Naive thymus-derived CD4-positive, alpha-beta T cell (primary cell): ENCODE measurements at regions of chr18 and their contacts with region 1.

Region 1: GRCh38 chr18:2906704-2907549 is 60.1 kb downstream of the EMILIN2 start:
- DNase-seq: peak; percentile 33 to 76 (median 50)
- ATAC-seq: peak; percentile 79
- H3K4me3 ChIP-seq: peak overlapping the region; percentile 64
- H3K4me3 Mint-ChIP-seq: peak overlapping the region; percentile 76 to 90 (median 84)
- H3K27ac ChIP-seq: peak overlapping the region; percentile 66
- H3K27ac Mint-ChIP-seq: peak overlapping the region; percentile 49 to 90 (median 76)
- H3K4me1 ChIP-seq: peaks cover 9 to 11% of the 10 kb centered on the region in 2 donors
- H3K4me1 Mint-ChIP-seq: peaks cover 0 to 32% (median 24%) of the 10 kb centered on the region in 7 donors
- H3K27me3 ChIP-seq: no peaks in the 10 kb centered on the region
- H3K27me3 Mint-ChIP-seq: no peaks in the 10 kb centered on the region

Region 2: GRCh38 chr18:2774669-2775068 is 132.3 kb before region 1 on chr18:
- CTCF ChIA-PET with region 1: no interaction called
- POLR2A ChIA-PET with region 1: no interaction called
- intact Hi-C with region 1: loop called in 1 of 2 experiments (anchors 5 kb)
- DNase-seq: no peak
- ATAC-seq: no peak
- H3K4me3 ChIP-seq: no peak overlapping the region
- H3K4me3 Mint-ChIP-seq: no peak overlapping the region
- H3K27ac ChIP-seq: no peak overlapping the region
- H3K27ac Mint-ChIP-seq: peak overlapping the region in 3 of 9 donors; percentile 5 to 78 (median 69)
- H3K4me1 ChIP-seq: no peaks in the 10 kb centered on the region
- H3K4me1 Mint-ChIP-seq: peaks cover 0 to 15% (median 3%) of the 10 kb centered on the region in 7 donors
- H3K27me3 ChIP-seq: no peaks in the 10 kb centered on the region
- H3K27me3 Mint-ChIP-seq: no peaks in the 10 kb centered on the region

Region 3: GRCh38 chr18:2797951-2798350 is 109.0 kb before region 1 on chr18:
- CTCF ChIA-PET with region 1: no interaction called
- POLR2A ChIA-PET with region 1: no interaction called
- intact Hi-C with region 1: loop called in 1 of 2 experiments (anchors 5 kb)
- DNase-seq: no peak
- ATAC-seq: no peak
- H3K4me3 ChIP-seq: no peak overlapping the region
- H3K4me3 Mint-ChIP-seq: no peak overlapping the region
- H3K27ac ChIP-seq: no peak overlapping the region
- H3K27ac Mint-ChIP-seq: peak overlapping the region in 3 of 9 donors; percentile 6 to 48 (median 41)
- H3K4me1 ChIP-seq: no peaks in the 10 kb centered on the region
- H3K4me1 Mint-ChIP-seq: peaks cover 3 to 21% (median 9%) of the 10 kb centered on the region in 7 donors
- H3K27me3 ChIP-seq: no peaks in the 10 kb centered on the region
- H3K27me3 Mint-ChIP-seq: no peaks in the 10 kb centered on the region

Region 4: GRCh38 chr18:2805970-2806943 is 100.7 kb before region 1 on chr18:
- CTCF ChIA-PET with region 1: interaction called, 4 read pairs
- POLR2A ChIA-PET with region 1: no interaction called
- intact Hi-C with region 1: loop called in 1 of 2 experiments (anchors 2 kb)
- DNase-seq: no peak
- ATAC-seq: no peak
- H3K4me3 ChIP-seq: no peak overlapping the region
- H3K4me3 Mint-ChIP-seq: no peak overlapping the region
- H3K27ac ChIP-seq: no peak overlapping the region
- H3K27ac Mint-ChIP-seq: peak overlapping the region in 6 of 9 donors; percentile 15 to 81 (median 56)
- H3K4me1 ChIP-seq: no peaks in the 10 kb centered on the region
- H3K4me1 Mint-ChIP-seq: no peaks in the 10 kb centered on the region
- H3K27me3 ChIP-seq: no peaks in the 10 kb centered on the region
- H3K27me3 Mint-ChIP-seq: no peaks in the 10 kb centered on the region

Region 5: GRCh38 chr18:2846636-2847364 is 60.1 kb before region 1 on chr18 and contains the start of gene EMILIN2:
- CTCF ChIA-PET with region 1: interaction called, 3 read pairs
- POLR2A ChIA-PET with region 1: no interaction called
- intact Hi-C with region 1: loop called (anchors 1 to 2 kb)
- DNase-seq: peak; percentile 22 to 52 (median 35)
- ATAC-seq: peak; percentile 79
- H3K4me3 ChIP-seq: peak within 1 kb of the TSS; percentile 54
- H3K4me3 Mint-ChIP-seq: peak within 1 kb of the TSS; percentile 81 to 93 (median 90)
- H3K27ac ChIP-seq: no peak within 1 kb of the TSS
- H3K27ac Mint-ChIP-seq: peak within 1 kb of the TSS in 5 of 9 donors; percentile 22 to 91 (median 65)
- H3K4me1 ChIP-seq: peaks cover 0 to 12% of the 10 kb centered on the region in 2 donors
- H3K4me1 Mint-ChIP-seq: peaks cover 17 to 28% (median 21%) of the 10 kb centered on the region in 7 donors
- H3K27me3 ChIP-seq: peaks cover 10 to 15% of the 10 kb centered on the region in 2 donors
- H3K27me3 Mint-ChIP-seq: peaks cover 19 to 55% (median 47%) of the 10 kb centered on the region in 5 donors
- total RNA-seq, gene EMILIN2: 6.2 to 51.1 (median 16.9) TPM

Region 6: DNA sequence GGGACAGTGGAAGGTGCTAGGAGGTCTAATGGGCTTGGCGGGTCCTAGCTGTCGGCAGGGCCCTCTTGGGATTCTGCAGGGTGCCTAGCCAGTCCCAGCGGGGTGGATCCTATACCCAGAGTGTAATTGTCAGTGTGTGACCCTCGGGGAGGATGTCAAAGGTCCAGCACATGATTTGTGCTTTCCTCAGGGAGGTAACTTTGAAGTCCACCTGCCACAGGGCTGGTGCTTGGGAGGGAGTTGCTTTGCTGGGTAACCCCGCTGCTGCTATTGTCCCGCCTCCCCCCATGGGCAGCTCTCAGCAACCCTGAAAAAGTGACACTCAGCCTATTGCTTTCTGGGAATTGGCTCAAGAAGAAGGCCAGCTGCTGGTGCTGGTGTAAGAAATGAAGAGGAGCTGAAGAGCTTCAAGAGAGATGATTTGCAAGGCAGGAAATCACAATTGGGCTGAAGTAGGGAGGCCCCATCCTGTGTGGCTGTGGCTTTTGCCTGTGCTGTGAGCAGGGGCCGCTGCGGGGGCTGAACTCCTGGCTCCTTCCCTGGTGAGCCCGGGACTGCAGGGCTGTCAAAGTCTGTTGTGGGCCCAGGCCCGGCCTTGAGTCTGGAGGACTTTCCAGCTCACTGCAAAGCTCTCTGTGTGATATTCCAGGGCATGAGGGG is 23.7 kb before region 1 on chr18:
- CTCF ChIA-PET with region 1: no interaction called
- POLR2A ChIA-PET with region 1: interaction called, 3 read pairs
- intact Hi-C with region 1: loop called (anchors 1 to 2 kb)
- DNase-seq: peak in 7 of 9 donors; percentile 37 to 58 (median 48)
- ATAC-seq: peak; percentile 83
- H3K4me3 ChIP-seq: peak overlapping the region; percentile 24
- H3K4me3 Mint-ChIP-seq: peak overlapping the region; percentile 68 to 85 (median 76)
- H3K27ac ChIP-seq: peak overlapping the region; percentile 46
- H3K27ac Mint-ChIP-seq: peak overlapping the region; percentile 86 to 96 (median 94)
- H3K4me1 ChIP-seq: peaks cover 25 to 31% of the 10 kb centered on the region in 2 donors
- H3K4me1 Mint-ChIP-seq: peaks cover 27 to 53% (median 43%) of the 10 kb centered on the region in 7 donors
- H3K27me3 ChIP-seq: no peaks in the 10 kb centered on the region
- H3K27me3 Mint-ChIP-seq: peaks cover 0 to 2% (median 0%) of the 10 kb centered on the region in 5 donors

Region 7: GRCh38 chr18:2889761-2890192 is 17.1 kb before region 1 on chr18:
- CTCF ChIA-PET with region 1: no interaction called
- POLR2A ChIA-PET with region 1: interaction called, 3 read pairs
- intact Hi-C with region 1: loop called in 1 of 2 experiments (anchors 1 kb)
- DNase-seq: peak in 5 of 9 donors; percentile 37 to 56 (median 39)
- ATAC-seq: peak; percentile 85
- H3K4me3 ChIP-seq: no peak overlapping the region
- H3K4me3 Mint-ChIP-seq: peak overlapping the region in 8 of 10 donors; percentile 11 to 86 (median 72)
- H3K27ac ChIP-seq: no peak overlapping the region
- H3K27ac Mint-ChIP-seq: peak overlapping the region; percentile 31 to 88 (median 75)
- H3K4me1 ChIP-seq: peaks cover 19 to 29% of the 10 kb centered on the region in 2 donors
- H3K4me1 Mint-ChIP-seq: peaks cover 39 to 65% (median 59%) of the 10 kb centered on the region in 7 donors
- H3K27me3 ChIP-seq: no peaks in the 10 kb centered on the region
- H3K27me3 Mint-ChIP-seq: no peaks in the 10 kb centered on the region